Left lung (tissue), 14 donors: ENCODE measurements at regions of chr1 and their contacts with region 1.

Region 1: DNA sequence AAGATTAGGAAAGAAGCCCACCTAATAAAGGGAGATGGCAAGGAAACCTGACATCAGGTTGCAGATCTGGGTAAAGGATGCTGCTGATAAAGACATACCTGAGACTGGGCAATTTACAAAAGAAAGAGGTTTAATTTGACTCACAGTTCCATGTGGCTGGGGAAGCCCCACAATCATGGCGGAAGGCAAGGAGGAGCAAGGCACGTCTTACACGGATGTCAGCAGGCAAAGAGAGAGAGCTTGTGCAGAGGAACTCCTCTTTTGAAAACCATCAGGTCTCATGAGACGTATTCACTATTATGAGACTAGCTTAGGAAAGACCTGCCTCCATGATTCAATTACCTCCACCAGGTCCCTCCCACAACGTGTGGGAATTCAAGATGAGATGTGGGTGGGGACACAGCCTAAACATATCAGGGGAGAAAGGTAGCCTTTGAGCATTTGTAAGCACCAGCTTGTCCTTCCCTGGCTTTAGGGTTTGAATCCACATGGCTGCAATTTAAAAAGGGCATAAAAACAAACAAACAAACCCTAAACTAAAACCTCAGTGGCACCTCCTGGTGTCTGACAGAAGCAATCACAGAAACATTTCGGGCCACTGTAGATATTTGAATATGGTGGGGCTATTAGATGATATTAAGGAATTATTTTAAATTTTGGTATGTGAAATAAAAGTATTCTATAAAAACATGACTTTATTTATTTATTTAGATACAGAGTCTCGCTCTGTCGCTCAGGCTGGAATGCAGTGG is 33.1 kb downstream of the SLC2A7 start:
- DNase-seq: no peak
- ATAC-seq: no peak
- H3K4me3 ChIP-seq: no peak overlapping the region
- H3K27ac ChIP-seq: no peak overlapping the region
- H3K4me1 ChIP-seq: peaks cover 0 to 3% of the 10 kb centered on the region in 2 donors
- H3K27me3 ChIP-seq: no peaks in the 10 kb centered on the region
- CTCF ChIP-seq: no peak

Region 2: GRCh38 chr1:8910914-8911313 is 82.2 kb before region 1 on chr1:
- intact Hi-C with region 1: loop called in 1 of 2 experiments (anchors 5 kb)
- DNase-seq: no peak
- ATAC-seq: no peak
- H3K4me3 ChIP-seq: no peak overlapping the region
- H3K27ac ChIP-seq: no peak overlapping the region
- H3K4me1 ChIP-seq: peaks cover 0 to 17% of the 10 kb centered on the region in 2 donors
- H3K27me3 ChIP-seq: no peaks in the 10 kb centered on the region
- CTCF ChIP-seq: no peak